Right ventricle myocardium superior (tissue), 1 donor: ENCODE measurements at regions of chr14 and their contacts with region 1.

Region 1: GRCh38 chr14:32939254-32940065 is 781 bp downstream of the NPAS3 start:
- DNase-seq: peak; percentile 87
- ATAC-seq: peak; percentile 95

Region 2: DNA sequence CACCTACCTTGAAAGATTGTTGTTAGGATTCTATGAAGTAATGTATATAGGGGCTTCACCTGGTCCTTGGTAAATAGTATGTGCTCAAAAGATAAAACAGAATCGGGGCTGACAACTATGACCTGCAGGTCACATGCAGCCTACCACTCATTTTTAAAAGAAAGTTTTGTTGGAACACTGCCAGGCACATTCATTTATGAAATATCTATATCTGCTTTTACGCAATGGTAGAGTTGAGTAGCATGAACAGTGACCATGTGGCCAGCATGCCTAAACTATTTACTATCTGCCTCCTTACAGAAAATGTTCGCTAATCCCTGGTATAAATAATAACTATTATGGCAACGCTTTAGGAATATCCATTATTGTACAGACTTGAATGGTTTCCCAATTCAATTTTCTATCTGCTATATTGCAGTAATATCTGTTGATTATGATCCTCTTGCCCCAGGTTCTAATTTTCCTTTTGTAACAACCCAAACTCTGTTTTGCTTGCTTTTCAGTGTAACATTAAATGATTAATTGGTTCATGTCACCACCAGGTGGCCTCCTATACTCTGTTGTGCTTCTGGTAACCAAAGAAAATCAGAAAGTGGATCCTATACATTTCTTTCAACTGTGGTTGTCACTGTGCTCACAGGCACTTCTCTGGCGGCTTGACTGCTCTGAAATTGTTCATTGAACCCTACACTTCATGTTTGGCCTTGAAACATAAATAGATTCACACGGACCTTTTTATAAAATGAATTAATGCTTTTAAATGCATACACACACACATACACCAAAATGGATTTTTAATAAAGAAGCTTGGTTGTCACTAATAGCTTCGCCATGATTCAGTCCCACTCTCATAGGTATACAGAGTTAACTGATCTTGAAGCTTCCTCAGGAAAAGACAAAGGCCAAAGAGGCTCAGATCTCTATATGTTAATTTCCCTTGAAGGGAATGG is 228.5 kb before region 1 on chr14:
- intact Hi-C with region 1: loop called (anchors 10 kb)
- DNase-seq: no peak
- ATAC-seq: no peak

Region 3: GRCh38 chr14:32745498-32745897 is 194.0 kb before region 1 on chr14:
- intact Hi-C with region 1: no loop called
- DNase-seq: no peak
- ATAC-seq: no peak

Region 4: DNA sequence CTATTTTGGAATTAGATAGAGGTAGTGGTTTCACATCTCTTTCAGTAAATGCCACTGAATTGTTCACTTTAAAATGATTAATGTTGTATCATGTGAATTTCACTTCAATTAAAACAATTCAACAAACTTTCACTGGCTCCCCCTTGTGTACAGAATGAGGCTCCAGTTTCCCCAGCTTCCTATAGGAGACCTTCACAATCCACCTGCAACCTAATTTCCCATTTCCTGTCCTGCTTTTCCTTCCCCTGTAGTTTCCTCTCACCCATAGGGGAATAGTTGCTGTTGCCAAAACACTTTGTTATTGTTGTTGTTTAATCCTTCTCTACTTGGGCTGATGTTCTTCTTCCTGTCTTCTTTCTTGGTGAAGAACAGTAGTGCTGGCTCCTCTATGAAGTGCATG is 59.0 kb after region 1 on chr14:
- intact Hi-C with region 1: no loop called
- DNase-seq: no peak
- ATAC-seq: no peak